ENCODE measurements at regions of chr22 and their contacts with region 1.

Region 1: DNA sequence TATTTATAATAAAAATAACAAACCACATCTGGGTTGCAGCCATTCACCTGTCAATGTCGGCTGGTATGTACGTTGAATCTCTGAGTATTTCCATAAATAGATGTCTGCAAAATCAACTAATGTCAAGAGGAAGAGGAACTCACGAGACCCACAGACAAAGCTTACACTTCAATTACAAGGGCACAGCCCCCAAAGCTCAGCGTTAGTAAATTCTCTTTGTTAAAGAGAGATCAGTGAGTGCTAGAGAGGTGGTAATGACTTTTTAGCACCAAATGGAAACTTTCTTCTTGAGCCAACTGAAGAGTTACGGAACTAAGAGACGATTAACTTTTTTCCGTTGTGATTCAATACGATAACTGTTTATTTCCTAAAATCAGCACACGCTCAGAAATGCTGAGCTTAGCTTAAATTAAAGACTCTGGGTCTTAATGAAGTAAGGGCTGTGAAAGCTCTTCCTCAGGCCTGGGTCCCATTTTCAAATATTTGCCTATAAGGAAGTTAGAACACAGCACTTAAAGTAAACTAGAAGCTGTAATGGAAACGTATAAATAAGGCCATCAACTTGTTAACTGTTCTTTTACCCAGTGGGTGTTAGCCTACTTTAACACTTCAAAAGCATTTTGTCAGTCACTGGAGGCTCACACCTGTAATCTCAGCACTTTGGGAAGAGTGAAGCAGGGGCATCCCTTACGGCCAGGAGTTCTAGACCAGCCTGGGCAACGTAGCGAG is 22.8 kb upstream of the TFIP11 start:
- DNase-seq: peak; percentile 88
- H3K4me3 ChIP-seq: peak overlapping the region; percentile 60
- H3K27ac ChIP-seq: peak overlapping the region; percentile 98
- H3K4me1 ChIP-seq: peaks cover 51% of the 10 kb centered on the region
- CTCF ChIP-seq: no peak

Region 2: DNA sequence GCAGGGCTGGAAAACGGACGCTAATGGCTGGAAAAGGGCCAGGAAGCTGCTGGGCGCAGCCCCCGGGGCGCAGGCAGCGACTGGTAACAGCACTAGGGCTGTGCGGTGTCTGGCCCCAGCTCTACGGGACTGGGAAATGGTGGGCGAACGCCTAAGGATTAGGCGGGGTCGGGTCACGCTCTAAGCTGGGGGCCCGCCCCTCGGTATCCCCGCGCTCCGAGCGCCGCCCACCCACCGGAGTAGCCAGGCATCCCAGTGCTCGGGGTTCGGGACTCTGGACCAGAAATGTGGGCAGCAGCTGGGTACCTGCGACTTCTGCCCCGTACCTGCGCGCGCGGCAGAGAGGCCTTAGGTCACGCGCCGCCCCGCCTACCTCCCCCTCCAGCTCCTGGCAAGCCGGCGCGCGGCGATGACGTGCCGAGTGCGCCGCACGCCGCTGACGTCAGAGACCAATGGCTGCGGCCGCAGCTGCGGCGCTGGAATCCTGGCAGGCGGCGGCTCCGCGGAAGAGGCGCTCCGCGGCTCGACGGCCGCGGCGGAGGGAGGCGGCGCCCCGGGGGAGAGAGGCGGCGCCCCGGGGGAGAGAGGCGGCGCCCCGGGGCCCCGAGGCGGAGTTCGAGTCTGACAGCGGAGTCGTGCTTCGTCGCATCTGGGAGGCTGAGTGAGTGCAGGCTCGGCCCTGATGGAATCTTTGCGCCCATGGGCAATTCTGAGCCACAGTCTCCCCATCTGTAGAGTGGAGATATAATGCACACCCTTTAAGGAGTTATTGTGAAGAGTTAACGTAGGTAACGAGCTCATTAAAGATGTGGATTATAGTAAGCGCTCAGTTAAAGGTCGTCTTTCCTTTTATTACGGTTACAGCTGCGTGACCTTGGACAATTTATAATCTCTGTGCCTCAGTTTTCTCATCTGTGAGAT is 51.3 kb before region 1 on chr22 and contains the starts of genes HPS4 and SRRD:
- CTCF ChIA-PET with region 1: no interaction called
- POLR2A ChIA-PET with region 1: interaction called, 34 read pairs
- intact Hi-C with region 1: no loop called
- DNase-seq: peak; percentile 94
- H3K4me3 ChIP-seq: peak within 1 kb of the TSS; percentile 86
- H3K27ac ChIP-seq: peak within 1 kb of the TSS; percentile 95
- H3K4me1 ChIP-seq: peaks cover 69% of the 10 kb centered on the region
- CTCF ChIP-seq: no peak
- total RNA-seq, gene HPS4: 64.8 and 77.4 TPM in 2 replicates
- total RNA-seq, gene SRRD: 20.7 and 23.1 TPM in 2 replicates

Region 3: DNA sequence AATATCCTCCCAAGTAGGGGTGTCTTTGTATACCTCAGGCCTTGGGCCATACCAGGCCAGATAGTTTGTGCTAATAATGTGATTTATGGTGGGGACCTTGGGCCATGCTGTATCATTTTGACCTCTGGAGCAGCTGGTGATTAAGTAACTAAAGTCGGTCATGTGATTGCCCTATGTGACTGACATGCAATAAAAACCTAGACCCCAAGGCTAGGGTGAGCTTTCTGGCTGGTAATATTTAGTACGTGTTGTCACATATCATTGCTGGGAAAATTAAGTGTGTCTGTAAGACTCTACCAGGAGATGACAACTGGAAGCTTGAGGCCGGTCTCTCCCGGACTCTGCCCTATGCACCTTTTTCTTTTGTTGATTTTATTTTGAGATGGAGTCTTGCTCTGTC is 10.2 kb before region 1 on chr22:
- CTCF ChIA-PET with region 1: no interaction called
- POLR2A ChIA-PET with region 1: interaction called, 13 read pairs
- intact Hi-C with region 1: no loop called
- DNase-seq: no peak
- H3K4me3 ChIP-seq: no peak overlapping the region
- H3K27ac ChIP-seq: no peak overlapping the region
- H3K4me1 ChIP-seq: peaks cover 25% of the 10 kb centered on the region
- CTCF ChIP-seq: no peak

Region 4: DNA sequence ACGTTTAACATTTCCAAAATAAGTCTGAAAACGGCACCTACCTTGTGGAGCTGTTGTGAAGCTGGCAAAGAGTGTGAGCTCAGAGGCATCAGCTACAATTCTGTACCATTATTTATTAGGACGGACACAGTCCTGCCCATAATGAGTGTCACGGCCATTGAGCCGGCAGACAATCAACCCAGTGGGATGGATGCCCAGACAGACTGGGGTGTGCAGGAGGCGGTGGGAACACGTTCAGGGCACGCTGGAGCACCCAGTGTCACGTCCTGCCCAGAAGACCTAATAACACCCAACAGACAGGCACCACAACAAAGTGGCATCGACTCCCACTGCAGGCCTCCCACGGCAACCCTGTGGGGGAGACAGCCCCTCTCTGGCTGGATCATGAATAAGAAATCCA is 20.4 kb after region 1 on chr22:
- CTCF ChIA-PET with region 1: no interaction called
- POLR2A ChIA-PET with region 1: interaction called, 11 read pairs
- intact Hi-C with region 1: no loop called
- DNase-seq: no peak
- H3K4me3 ChIP-seq: no peak overlapping the region
- H3K27ac ChIP-seq: no peak overlapping the region
- H3K4me1 ChIP-seq: peaks cover 34% of the 10 kb centered on the region
- CTCF ChIP-seq: no peak

Region 5: DNA sequence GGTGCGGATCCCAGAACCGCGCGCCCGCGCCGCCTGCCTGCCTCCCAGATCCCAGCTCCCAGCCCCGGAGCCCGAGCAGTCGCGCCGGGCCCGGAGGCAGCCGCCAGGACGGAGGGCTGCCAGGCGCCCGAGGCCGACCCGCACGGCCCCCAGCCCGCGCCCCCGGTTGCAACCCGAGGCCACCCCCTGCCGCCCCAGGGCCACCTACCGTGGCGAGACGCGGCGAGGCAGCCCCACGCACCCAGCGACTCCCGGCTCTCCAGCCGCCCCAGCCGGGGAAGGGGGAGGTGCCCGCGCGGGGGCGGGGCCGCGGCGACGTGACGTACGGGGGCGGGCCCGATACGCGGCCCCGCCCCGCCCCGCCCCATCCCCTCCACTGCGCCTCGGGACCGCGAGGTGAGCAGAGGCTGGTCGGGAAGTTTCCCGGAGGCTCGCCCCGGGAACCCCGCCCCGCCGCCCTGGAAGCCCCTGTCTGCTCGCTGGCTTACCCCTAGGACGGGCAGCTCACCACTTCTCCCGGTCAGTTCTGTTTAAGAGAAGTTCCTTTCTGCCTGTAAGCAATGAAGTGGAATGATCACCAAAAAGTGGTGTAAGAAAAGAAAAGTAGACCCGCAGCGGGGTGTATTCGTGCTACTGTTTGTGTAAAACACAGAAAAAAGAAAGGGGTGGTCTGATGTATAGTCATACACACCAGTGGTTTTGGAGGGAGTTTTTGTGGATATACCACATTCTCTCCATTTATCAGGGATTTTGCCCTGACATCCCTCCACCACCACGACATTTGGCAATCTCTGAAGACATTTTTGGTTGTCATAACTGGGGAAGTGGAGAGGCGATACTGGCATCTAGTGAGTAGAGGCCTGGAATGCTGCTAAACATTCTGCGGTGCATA is 55.1 kb after region 1 on chr22 and contains the start of gene TPST2:
- CTCF ChIA-PET with region 1: no interaction called
- POLR2A ChIA-PET with region 1: interaction called, 10 read pairs
- intact Hi-C with region 1: loop called (anchors 2 kb)
- DNase-seq: peak; percentile 83
- H3K4me3 ChIP-seq: peak within 1 kb of the TSS; percentile 91
- H3K27ac ChIP-seq: peak within 1 kb of the TSS; percentile 23
- H3K4me1 ChIP-seq: peaks cover 44% of the 10 kb centered on the region
- CTCF ChIP-seq: no peak
- total RNA-seq, gene TPST2: 19.1 and 19.9 TPM in 2 replicates

Region 6: DNA sequence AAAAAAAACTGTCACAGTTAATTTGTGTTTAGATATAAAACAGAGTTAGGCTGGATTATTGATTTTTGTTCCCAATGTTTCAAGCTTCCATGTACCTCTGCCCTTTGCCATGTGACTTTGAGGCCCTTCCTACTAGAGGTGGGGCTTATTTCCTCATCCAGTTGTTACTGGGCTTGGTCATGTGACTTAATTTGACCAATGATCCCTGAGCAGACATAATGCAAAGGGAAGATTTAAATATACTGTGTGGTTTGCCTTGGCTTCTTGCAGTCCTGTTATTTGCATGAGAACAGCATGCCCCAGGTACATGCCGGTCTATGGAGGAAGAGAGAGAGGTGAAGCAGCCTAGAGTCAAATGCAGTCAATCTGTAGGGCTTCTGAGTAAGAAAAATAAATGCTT is 469.4 kb after region 1 on chr22:
- CTCF ChIA-PET with region 1: no interaction called
- POLR2A ChIA-PET with region 1: no interaction called
- intact Hi-C with region 1: no loop called
- DNase-seq: peak; percentile 5
- H3K4me3 ChIP-seq: no peak overlapping the region
- H3K27ac ChIP-seq: no peak overlapping the region
- H3K4me1 ChIP-seq: no peaks in the 10 kb centered on the region
- CTCF ChIP-seq: no peak